OCI-LY7 (cell line): ENCODE measurements at regions of chr5 and their contacts with region 1.

Region 1: GRCh38 chr5:27038476-27038875 is at the start of gene CDH9:
- DNase-seq: no peak
- H3K4me3 ChIP-seq: no peak within 1 kb of the TSS
- H3K27ac ChIP-seq: no peak within 1 kb of the TSS
- H3K4me1 ChIP-seq: no peaks in the 10 kb centered on the region
- CTCF ChIP-seq: no peak
- total RNA-seq, gene CDH9: not detected in 2 replicates

Region 2: DNA sequence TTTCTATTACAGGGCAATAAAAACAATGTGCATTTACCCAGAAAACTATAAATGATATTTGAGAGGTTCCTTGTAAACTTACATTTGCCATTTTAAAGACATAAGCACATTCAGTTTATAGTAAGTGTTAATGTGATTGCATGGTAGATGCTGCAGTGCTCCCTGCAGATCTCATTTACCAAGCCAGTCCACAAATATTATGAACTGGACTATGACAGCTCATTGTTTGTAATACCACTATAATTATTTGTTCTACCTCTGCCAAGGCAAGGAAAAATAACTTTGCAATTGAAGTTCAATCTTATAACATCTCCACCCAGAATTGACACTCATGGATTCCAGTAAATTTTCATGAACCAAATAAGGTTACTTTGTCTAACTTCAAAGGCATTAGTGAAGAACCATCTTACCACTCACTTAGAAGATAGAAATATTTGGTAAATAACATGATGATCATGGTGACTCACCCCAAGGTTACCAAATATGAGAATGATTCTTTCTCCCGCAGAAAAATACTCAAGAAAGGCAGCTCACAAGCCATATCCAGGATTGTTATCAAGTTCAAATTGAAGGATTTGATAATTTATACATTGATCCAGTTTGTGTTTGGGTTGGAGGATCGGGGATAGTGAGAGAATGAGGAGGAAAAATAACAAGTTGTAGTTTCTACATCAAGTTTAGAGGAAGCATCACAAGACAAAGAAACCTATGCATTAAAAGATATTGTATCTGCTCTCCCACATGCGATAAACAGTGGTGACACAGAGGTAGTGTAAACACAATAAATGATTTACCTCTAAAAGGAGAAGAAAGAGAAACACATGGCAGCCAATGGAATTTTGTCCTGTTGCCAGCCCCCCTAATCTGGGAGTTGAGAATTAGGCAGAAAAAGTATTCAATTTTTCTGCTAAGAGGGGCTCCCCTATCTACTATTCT is 29.6 kb before region 1 on chr5:
- CTCF ChIA-PET with region 1: no interaction called
- POLR2A ChIA-PET with region 1: no interaction called
- intact Hi-C with region 1: loop called (anchors 1 kb)
- DNase-seq: no peak
- H3K4me3 ChIP-seq: no peak overlapping the region
- H3K27ac ChIP-seq: no peak overlapping the region
- H3K4me1 ChIP-seq: no peaks in the 10 kb centered on the region
- CTCF ChIP-seq: no peak